PC-9 (cell line): ENCODE measurements at regions of chr3 and their contacts with region 1.

Region 1: GRCh38 chr3:18758047-18758704 is 333.0 kb upstream of the SATB1 start:
- DNase-seq: peak; percentile 46 to 85
- H3K4me3 ChIP-seq: no peak overlapping the region
- H3K27ac ChIP-seq: peak overlapping the region; percentile 38; the same call in 1 of the 2 replicates
- H3K4me1 ChIP-seq: peaks cover 17% of the 10 kb centered on the region
- H3K27me3 ChIP-seq: no peaks in the 10 kb centered on the region
- CTCF ChIP-seq: peak; percentile 94

Region 2: GRCh38 chr3:17431004-17431403 is 1327.2 kb before region 1 on chr3:
- CTCF ChIA-PET with region 1: no interaction called
- POLR2A ChIA-PET with region 1: no interaction called
- intact Hi-C with region 1: loop called (anchors 5 kb)
- DNase-seq: no peak
- H3K4me3 ChIP-seq: no peak overlapping the region
- H3K27ac ChIP-seq: no peak overlapping the region
- H3K4me1 ChIP-seq: peaks cover 13% of the 10 kb centered on the region
- H3K27me3 ChIP-seq: no peaks in the 10 kb centered on the region
- CTCF ChIP-seq: peak; percentile 70

Region 3: DNA sequence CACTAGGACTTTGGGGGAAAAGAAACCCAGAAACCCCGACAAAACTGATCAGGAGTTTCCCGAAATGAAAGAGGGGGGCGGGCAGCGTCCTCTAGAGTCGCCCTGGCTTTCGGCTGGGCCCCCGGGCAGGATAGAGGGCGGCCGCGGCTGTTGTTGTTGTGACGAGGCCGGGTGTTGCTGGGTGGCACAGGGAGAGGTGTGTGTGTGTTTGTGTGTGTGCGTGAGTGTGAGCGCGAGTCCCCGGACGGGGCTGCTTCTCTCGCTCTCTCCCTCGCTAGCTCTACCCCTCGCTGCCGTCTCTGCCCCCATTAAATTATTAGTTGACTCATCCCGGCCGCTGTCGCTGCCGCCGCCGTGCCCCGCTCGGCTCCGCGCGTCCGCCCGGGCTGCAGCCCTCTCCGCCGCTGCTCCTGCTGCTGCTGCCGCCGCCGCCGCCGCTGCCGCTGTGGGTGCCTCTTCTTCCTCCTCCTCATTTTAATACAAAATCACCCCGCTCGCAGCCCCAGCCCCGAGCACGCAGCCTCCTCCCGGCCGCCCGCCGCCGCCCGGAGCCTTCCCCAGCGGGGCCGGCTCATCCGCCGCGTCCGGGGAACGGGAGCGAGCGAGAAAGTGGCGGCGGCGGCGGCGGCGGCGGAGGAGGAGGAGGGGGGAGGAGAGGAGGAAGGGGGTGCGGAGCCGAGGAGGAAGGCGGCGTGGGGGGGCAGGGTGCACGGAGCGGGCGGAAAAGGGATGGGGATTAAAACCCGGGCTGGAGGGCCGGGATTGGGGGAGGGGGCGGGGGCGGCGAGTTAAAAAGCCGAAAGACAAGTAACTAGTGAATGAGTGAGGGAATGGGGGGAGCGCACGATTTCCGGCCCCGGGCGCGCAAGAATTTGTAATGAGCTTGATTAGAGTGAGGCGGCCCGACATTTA is 333.2 kb before region 1 on chr3 and contains the start of gene SATB1:
- CTCF ChIA-PET with region 1: no interaction called
- POLR2A ChIA-PET with region 1: no interaction called
- intact Hi-C with region 1: loop called (anchors 2 kb)
- DNase-seq: peak in 1 of 2 experiments; percentile 69
- H3K4me3 ChIP-seq: peak within 1 kb of the TSS; percentile 86
- H3K27ac ChIP-seq: peak within 1 kb of the TSS; percentile 50
- H3K4me1 ChIP-seq: peaks cover 26% of the 10 kb centered on the region
- H3K27me3 ChIP-seq: no peaks in the 10 kb centered on the region
- CTCF ChIP-seq: no peak
- total RNA-seq, gene SATB1: 25.4 and 28.7 TPM in 2 replicates

Region 4: DNA sequence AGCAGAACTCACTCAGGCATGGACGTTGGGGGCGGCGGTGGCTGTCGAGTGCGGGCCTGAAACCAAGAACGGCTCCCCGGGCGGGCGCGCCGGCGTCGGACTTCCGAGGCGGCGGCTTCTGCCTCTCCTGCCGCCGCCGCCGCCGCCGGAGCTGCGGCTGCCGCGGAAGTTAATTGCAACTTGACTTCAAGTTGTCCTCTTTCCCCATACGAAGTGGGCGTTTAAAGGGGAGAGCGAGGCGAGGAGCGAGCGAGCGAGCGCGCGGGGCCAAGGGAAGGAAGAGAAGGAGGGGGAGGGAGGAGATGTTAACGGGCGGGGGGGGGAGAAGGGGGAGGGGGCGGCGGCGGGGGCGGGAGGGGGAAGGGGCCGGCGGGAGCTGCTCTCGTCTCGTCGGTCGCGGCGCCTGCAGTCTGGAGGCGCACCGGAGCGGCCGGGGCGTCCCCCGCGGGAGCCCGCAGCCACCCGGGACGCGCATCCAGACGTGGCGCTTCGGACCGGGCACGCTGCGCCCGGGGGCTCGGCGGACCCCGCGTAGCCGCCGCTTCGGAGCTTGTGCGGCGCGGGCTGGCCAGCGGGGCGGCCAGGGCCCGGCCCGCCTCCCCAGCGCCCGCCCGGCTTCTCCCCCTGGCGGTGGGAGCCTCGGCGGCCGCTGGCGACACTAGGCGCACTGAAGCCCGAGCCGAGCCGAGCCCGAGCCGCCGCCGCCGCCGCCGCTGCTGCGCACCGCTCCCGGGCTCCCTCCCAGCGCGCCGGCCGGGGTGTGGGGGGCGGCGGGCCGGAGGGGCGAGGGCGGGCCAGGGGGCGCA is 313.4 kb before region 1 on chr3:
- CTCF ChIA-PET with region 1: no interaction called
- POLR2A ChIA-PET with region 1: no interaction called
- intact Hi-C with region 1: loop called (anchors 2 kb)
- DNase-seq: peak; percentile 40 to 75
- H3K4me3 ChIP-seq: peak overlapping the region; percentile 98
- H3K27ac ChIP-seq: no peak overlapping the region
- H3K4me1 ChIP-seq: peaks cover 24% of the 10 kb centered on the region
- H3K27me3 ChIP-seq: no peaks in the 10 kb centered on the region
- CTCF ChIP-seq: no peak

Region 5: GRCh38 chr3:18499301-18499700 is 258.9 kb before region 1 on chr3:
- CTCF ChIA-PET with region 1: no interaction called
- POLR2A ChIA-PET with region 1: no interaction called
- intact Hi-C with region 1: no loop called
- DNase-seq: no peak
- H3K4me3 ChIP-seq: no peak overlapping the region
- H3K27ac ChIP-seq: no peak overlapping the region
- H3K4me1 ChIP-seq: peaks cover 15% of the 10 kb centered on the region
- H3K27me3 ChIP-seq: no peaks in the 10 kb centered on the region
- CTCF ChIP-seq: no peak

Region 6: DNA sequence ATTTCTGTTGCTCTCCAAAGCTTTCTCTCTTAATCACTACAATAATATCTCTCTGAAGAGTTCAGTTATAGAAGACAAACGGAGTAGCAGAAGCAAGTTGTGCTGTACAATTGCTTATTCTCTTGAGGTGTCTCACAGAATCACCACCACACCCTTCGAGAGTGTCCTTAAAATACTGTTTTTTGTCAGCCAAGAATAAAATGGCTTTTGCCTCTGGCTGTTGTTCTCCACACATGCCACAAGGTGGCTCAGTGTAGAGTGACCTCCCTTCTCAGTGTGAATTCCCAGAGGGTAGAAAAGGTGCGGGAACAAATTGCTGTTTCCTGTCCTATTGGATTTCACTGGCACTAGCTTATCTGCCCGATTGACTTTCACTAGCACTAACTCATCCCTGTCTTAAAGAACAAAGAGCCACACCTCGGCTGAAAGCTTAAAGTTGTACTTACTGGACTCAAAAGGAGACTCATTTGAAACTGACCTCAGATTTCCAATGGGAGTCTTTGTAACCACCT is 198.8 kb before region 1 on chr3:
- CTCF ChIA-PET with region 1: interaction called, 5 read pairs
- POLR2A ChIA-PET with region 1: no interaction called
- intact Hi-C with region 1: loop called (anchors 1 kb)
- DNase-seq: peak in 1 of 2 experiments; percentile 10
- H3K4me3 ChIP-seq: no peak overlapping the region
- H3K27ac ChIP-seq: no peak overlapping the region
- H3K4me1 ChIP-seq: 0 out of 2 replicates have a peak, but pooled peaks cover 6% of the 10 kb centered on the region
- H3K27me3 ChIP-seq: no peaks in the 10 kb centered on the region
- CTCF ChIP-seq: peak; percentile 87

Region 7: GRCh38 chr3:18988614-18989229 is 230.5 kb after region 1 on chr3:
- CTCF ChIA-PET with region 1: interaction called, 3 read pairs
- POLR2A ChIA-PET with region 1: no interaction called
- intact Hi-C with region 1: loop called (anchors 2 kb)
- DNase-seq: no peak
- H3K4me3 ChIP-seq: no peak overlapping the region
- H3K27ac ChIP-seq: no peak overlapping the region
- H3K4me1 ChIP-seq: no peaks in the 10 kb centered on the region
- H3K27me3 ChIP-seq: no peaks in the 10 kb centered on the region
- CTCF ChIP-seq: peak; percentile 86

Region 8: GRCh38 chr3:19016851-19017250 is 258.7 kb after region 1 on chr3:
- CTCF ChIA-PET with region 1: no interaction called
- POLR2A ChIA-PET with region 1: no interaction called
- intact Hi-C with region 1: no loop called
- DNase-seq: no peak
- H3K4me3 ChIP-seq: no peak overlapping the region
- H3K27ac ChIP-seq: no peak overlapping the region
- H3K4me1 ChIP-seq: 0 out of 2 replicates have a peak, but pooled peaks cover 5% of the 10 kb centered on the region
- H3K27me3 ChIP-seq: no peaks in the 10 kb centered on the region
- CTCF ChIP-seq: no peak

Region 9: DNA sequence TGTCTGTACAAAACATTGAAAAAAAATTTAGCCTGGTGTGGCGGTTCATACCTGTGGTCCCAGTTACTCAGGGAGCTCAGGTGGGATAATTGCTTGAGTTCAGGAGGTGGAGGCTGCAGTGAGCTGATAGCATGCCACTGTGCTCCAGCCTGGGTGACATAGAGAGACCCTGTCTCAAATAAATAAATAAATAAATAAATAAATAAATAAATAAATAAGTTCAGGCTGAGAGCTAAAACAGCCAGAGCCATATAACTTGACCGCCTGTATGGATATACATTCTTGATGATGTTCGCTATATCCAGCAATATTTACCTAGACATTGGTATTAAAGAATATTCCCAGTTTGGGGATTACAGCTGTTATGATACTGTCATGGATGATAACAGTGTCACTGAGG is 537.0 kb after region 1 on chr3:
- CTCF ChIA-PET with region 1: no interaction called
- POLR2A ChIA-PET with region 1: no interaction called
- intact Hi-C with region 1: no loop called
- DNase-seq: no peak
- H3K4me3 ChIP-seq: no peak overlapping the region
- H3K27ac ChIP-seq: no peak overlapping the region
- H3K4me1 ChIP-seq: no peaks in the 10 kb centered on the region
- H3K27me3 ChIP-seq: no peaks in the 10 kb centered on the region
- CTCF ChIP-seq: no peak